ENCODE measurements at regions of chr2 and their contacts with region 1.

Region 1: DNA sequence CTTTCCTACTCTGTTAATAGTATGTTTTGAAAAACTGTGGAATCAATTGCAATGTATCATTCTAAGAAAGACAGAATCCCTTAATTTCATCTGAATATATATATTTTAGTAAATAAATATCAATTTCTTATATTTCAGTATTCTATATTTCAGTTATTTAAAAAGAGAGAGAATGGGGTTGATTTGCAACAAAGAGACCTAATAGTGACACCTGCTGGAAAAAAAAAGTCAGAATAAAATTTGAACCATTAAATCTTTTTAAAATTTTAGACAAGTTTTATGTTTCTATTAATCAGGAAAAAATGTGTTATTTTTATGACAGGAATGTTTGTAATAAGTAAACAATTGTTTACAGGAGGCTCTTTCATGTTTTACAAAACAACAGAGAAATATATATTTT is 20.7 kb upstream of the CCNT2 start:
- DNase-seq: no peak
- H3K4me3 ChIP-seq: no peak overlapping the region
- H3K27ac ChIP-seq: no peak overlapping the region
- H3K4me1 ChIP-seq: no peaks in the 10 kb centered on the region
- H3K27me3 ChIP-seq: no peaks in the 10 kb centered on the region
- CTCF ChIP-seq: peak; percentile 60

Region 2: GRCh38 chr2:134002391-134002790 is 895.5 kb before region 1 on chr2:
- intact Hi-C with region 1: no loop called
- DNase-seq: no peak
- H3K4me3 ChIP-seq: no peak overlapping the region
- H3K27ac ChIP-seq: no peak overlapping the region
- H3K4me1 ChIP-seq: no peaks in the 10 kb centered on the region
- H3K27me3 ChIP-seq: no peaks in the 10 kb centered on the region
- CTCF ChIP-seq: no peak

Region 3: GRCh38 chr2:134460583-134460998 is 437.3 kb before region 1 on chr2:
- intact Hi-C with region 1: loop called (anchors 10 kb)
- DNase-seq: peak; percentile 48
- H3K4me3 ChIP-seq: no peak overlapping the region
- H3K27ac ChIP-seq: no peak overlapping the region
- H3K4me1 ChIP-seq: no peaks in the 10 kb centered on the region
- H3K27me3 ChIP-seq: no peaks in the 10 kb centered on the region
- CTCF ChIP-seq: peak; percentile 73